Left ventricle myocardium inferior (tissue), 1 donor: ENCODE measurements at regions of chr9 and their contacts with region 1.

Region 1: DNA sequence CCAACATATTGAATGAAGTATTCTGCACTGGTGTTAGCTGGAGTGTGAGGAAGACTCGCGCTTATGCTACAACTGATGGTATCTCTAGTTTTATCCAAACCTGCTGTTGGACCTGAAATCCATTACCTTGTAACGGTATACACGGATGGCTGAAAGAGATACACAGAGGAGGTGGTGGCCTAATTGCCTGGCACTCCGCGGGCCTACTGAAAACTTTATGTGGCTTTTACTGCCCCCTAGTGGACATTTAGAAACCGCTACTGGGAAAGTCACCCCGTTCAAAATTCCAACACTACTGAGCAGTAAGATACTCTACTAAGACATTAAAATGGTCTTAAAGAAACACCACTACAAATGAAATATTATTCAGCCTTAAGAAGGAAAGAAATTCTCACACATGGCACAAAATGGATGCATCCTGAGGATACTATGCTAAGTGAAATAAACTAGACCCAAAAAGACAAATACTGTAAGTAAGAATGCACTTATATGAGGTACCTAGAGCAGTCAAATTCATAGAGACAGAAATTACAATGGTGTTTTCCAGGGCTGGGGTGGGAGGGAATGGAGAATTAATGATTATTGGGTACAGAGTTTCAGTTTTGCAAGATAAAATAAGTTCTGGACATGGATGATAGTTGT is 100.4 kb downstream of the TTLL11 start:
- DNase-seq: peak; percentile 49
- H3K4me3 ChIP-seq: no peak overlapping the region
- H3K27ac ChIP-seq: no peak overlapping the region
- H3K4me1 ChIP-seq: peaks cover 22% of the 10 kb centered on the region
- H3K27me3 ChIP-seq: no peaks in the 10 kb centered on the region
- CTCF ChIP-seq: peak; percentile 86

Region 2: GRCh38 chr9:121686930-121687541 is 305.7 kb before region 1 on chr9:
- intact Hi-C with region 1: loop called (anchors 5 kb)
- DNase-seq: peak; percentile 74
- H3K4me3 ChIP-seq: no peak overlapping the region
- H3K27ac ChIP-seq: no peak overlapping the region
- H3K4me1 ChIP-seq: peaks cover 82% of the 10 kb centered on the region
- H3K27me3 ChIP-seq: no peaks in the 10 kb centered on the region
- CTCF ChIP-seq: peak; percentile 90